ENCODE measurements at regions of chr17 and their contacts with region 1.

Region 1: DNA sequence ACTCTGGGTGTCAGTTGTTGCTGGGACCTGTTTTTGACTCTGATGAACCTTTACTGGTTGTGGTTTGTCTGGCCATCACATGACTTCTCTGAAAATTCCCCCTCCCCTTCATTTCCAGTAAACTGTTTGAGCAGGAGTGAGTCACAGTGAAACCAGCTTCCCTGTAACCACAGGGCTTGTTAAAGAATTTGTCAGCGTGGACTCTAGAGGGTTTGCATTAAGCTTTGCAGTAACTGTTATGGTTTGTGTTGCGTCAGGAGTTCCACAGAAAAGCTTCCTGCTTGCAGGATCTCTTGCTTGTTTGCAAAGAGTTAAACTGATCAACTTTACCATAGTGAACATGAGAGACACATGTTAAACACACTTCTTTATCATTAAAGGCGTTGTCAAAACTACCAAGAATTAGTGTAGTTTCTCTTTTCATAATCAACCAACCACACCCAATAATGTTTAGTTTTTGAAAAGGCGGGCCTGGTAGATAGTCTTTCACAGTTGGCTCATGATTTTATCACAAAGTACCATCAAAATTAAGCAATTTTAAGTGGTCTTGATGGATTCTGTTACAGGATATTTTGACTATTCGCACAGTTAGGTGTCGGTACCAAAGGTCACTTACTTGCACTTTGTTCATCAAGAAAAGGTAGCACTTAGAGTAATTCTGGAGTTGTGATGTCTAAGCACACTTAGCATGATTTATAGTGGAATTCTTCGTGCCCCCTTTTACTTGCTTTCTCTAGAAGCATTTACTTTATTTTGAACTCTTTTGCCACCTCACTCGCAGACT is 79.3 kb downstream of the VMP1 start:
- DNase-seq: peak; percentile 86
- ATAC-seq: peak; percentile 84
- H3K4me3 Mint-ChIP-seq: peak overlapping the region; percentile 71
- H3K27ac Mint-ChIP-seq: peak overlapping the region; percentile 96
- H3K4me1 Mint-ChIP-seq: peaks cover 68% of the 10 kb centered on the region
- H3K27me3 Mint-ChIP-seq: no peaks in the 10 kb centered on the region

Region 2: DNA sequence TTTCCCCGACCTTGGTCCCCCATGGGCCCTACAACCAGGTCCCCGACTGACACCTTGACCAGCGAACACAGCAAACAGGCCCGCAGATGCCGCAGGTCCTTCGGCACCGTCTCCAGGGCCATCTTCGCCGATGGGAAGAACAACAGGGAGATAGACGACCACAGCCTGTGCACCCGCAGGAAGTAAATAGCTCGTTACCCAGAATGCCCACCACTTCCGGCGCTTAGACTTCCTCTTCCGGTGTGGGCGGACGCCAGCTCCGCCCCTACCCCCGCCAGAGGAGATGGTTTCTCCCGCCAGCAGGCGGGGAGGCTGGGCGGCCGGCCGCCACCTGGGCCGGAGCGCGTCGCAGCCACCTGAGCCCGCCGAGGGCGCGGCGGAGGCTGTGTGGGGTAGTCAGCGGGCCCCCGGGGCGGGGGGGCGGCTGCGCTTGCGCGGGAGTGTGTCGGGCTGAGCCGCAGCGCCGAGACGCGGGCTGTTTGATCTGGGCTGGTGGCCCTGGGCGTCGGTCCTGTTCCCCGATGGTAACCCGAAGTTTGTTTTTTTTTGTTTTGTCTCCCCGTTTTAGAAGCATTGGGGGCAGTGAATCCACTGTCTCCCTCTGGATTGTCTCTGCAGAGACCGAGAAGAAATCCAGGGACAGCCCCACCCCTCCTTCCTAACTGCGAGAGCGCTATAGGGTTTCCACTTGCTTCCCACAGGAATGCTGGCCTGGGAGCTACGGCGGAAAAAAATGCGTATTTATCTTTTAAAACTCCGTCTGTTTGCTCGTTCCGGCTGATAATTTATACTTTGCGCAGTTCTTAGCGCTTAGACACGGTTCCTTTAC is 1434.5 kb before region 1 on chr17 and contains the start of gene SUPT4H1:
- CTCF ChIA-PET with region 1: no interaction called
- POLR2A ChIA-PET with region 1: no interaction called
- intact Hi-C with region 1: loop called in 1 of 2 experiments (anchors 5 kb)
- DNase-seq: peak; percentile 96
- ATAC-seq: peak; percentile 78
- H3K4me3 Mint-ChIP-seq: peak within 1 kb of the TSS; percentile 97
- H3K27ac Mint-ChIP-seq: peak within 1 kb of the TSS; percentile 98
- H3K4me1 Mint-ChIP-seq: peaks cover 38% of the 10 kb centered on the region
- H3K27me3 Mint-ChIP-seq: no peaks in the 10 kb centered on the region
- total RNA-seq, gene SUPT4H1: 106 to 129 TPM

Region 3: DNA sequence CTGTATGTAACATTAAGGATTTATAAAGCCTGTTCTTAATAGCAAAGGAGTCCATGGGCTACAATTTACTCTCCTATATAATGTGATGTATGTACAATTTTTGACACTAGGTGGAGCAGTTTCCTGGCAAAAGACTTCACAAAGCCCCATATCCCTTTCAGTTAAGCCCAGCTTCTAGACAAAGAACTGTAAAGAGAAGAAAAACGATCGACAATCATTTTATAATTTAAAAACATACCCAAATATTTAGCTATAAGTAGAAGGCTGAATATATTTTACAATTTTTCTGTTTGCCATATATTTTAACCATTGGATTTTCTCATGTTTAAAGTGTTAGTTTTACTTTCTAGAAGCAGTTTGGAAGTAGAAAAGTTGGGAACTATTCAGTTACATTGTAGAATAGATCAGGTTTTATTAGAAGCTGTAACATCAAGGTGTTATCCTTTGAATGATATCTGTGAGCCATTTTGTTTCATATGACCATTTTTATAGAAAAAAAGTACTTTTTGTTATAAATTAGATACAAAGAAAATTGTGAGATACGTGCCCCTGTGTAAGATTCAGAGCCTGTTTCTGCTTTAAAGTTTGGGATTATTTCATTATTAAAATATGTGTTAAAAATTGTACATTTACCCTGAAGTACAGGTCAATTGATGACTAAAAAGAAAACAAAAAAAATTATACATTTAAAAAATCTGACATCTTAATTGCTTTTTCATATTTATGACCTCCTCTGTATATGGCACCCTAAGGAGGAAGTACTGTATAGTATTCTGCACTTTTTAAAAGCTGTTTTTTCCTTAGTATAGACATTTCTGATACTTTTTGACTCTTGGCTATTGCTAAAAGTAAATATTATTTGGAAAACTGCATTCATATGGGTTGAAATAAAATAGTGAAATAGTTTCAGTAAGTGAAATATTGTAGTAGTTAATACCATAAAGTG is 32.9 kb before region 1 on chr17:
- CTCF ChIA-PET with region 1: interaction called, 110 read pairs
- POLR2A ChIA-PET with region 1: interaction called, 96 read pairs
- intact Hi-C with region 1: loop called (anchors 1 kb)
- DNase-seq: no peak
- ATAC-seq: peak; percentile 47
- H3K4me3 Mint-ChIP-seq: peak overlapping the region; percentile 66
- H3K27ac Mint-ChIP-seq: peak overlapping the region; percentile 92
- H3K4me1 Mint-ChIP-seq: peaks cover 71% of the 10 kb centered on the region
- H3K27me3 Mint-ChIP-seq: no peaks in the 10 kb centered on the region

Region 4: GRCh38 chr17:59829217-59830006 is 42.7 kb after region 1 on chr17:
- CTCF ChIA-PET with region 1: interaction called, 36 read pairs
- POLR2A ChIA-PET with region 1: interaction called, 180 read pairs
- intact Hi-C with region 1: loop called (anchors 1 kb)
- DNase-seq: peak; percentile 65
- ATAC-seq: peak; percentile 72
- H3K4me3 Mint-ChIP-seq: peak overlapping the region; percentile 78
- H3K27ac Mint-ChIP-seq: peak overlapping the region; percentile 93
- H3K4me1 Mint-ChIP-seq: peaks cover 87% of the 10 kb centered on the region
- H3K27me3 Mint-ChIP-seq: no peaks in the 10 kb centered on the region

Region 5: DNA sequence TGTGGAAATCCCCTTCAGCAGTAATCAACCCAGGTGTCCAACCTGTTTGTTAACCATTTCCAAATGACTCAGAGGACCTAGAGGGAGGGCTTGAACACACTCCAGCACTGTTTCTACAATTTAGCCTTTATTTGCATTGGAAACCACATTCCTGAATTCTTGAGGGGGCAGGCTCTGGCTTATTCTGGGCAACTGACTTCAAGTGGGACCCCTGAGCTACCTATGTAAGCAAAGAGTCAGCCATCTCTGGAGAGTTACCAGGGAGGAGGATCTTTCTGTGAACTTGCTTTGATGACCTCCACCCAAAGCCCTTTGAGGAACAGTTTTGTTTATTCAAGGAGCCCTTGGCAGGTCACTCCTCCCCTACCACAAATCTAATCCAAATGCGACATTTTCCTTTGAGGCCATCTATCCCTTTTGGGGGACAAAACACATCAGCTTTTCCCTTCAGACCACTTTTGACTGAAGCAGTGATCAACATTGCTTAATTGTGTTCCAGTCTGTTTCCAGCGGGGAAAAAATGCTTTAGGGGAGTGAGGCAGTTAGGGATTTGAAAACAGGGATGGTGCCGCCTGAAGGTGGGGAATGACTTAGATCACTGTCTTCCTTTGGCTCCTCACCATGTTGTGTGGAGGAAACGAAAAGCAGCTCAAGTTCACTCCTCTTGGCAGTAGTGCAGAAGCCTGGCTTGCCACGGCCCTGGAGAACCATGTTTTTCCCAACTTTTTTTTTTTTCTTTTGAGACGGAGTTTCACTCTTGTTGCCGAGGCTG is 59.9 kb after region 1 on chr17:
- CTCF ChIA-PET with region 1: interaction called, 4 read pairs
- POLR2A ChIA-PET with region 1: interaction called, 230 read pairs
- intact Hi-C with region 1: loop called (anchors 1 kb)
- DNase-seq: no peak
- ATAC-seq: peak; percentile 21
- H3K4me3 Mint-ChIP-seq: peak overlapping the region; percentile 46
- H3K27ac Mint-ChIP-seq: peak overlapping the region; percentile 87
- H3K4me1 Mint-ChIP-seq: peaks cover 73% of the 10 kb centered on the region
- H3K27me3 Mint-ChIP-seq: no peaks in the 10 kb centered on the region

Region 6: GRCh38 chr17:59964482-59965328 is 178.0 kb after region 1 on chr17 and contains the start of gene RNFT1:
- CTCF ChIA-PET with region 1: no interaction called
- POLR2A ChIA-PET with region 1: no interaction called
- intact Hi-C with region 1: loop called in 1 of 2 experiments (anchors 1 kb)
- DNase-seq: peak; percentile 97
- ATAC-seq: peak; percentile 84
- H3K4me3 Mint-ChIP-seq: peak within 1 kb of the TSS; percentile 78
- H3K27ac Mint-ChIP-seq: peak within 1 kb of the TSS; percentile 96
- H3K4me1 Mint-ChIP-seq: peaks cover 19% of the 10 kb centered on the region
- H3K27me3 Mint-ChIP-seq: no peaks in the 10 kb centered on the region
- total RNA-seq, gene RNFT1: 32.8 to 36.9 TPM

Region 7: DNA sequence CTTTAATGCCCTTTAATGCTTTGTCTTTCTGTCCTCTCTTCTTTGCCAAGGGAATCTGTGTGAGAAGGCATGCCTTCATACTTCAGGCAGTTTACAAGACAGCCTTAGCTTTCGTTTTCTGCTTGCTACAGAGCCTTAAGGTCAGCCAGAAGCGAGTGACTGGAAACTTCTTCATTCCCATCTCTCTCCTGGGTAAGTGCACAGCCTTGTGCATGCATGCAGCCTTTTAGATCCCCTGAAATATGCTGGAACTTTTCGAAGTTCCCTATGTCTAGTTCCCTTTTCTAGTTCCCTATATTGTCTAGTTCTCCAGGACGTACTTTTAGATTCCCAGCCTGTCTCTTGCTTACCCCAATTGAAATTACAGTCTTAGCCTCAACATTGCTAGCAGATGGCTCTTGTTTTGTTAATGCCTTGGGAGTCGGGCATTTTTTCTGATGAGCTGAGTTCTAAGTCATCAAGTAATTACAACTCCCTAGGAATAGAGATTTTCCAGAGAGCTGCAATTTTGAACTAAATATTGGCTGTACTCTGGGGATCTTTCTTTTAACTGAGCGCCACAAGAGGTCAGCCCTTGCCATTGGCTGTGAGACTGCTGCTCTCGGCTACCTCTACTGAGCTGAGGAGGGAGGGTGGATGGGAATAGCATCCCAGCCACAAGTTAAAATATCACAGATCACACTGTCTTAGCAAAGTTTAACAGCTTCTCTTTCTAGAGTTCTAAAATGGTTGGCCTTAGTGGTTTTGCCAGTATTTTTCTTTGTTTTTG is 790.6 kb after region 1 on chr17:
- CTCF ChIA-PET with region 1: no interaction called
- POLR2A ChIA-PET with region 1: no interaction called
- intact Hi-C with region 1: no loop called
- DNase-seq: peak; percentile 25
- ATAC-seq: peak; percentile 61
- H3K4me3 Mint-ChIP-seq: peak overlapping the region; percentile 50
- H3K27ac Mint-ChIP-seq: peak overlapping the region; percentile 4
- H3K4me1 Mint-ChIP-seq: peaks cover 9% of the 10 kb centered on the region
- H3K27me3 Mint-ChIP-seq: peaks cover 1% of the 10 kb centered on the region